K562 (cell line): ENCODE measurements at regions of chr10 and their contacts with region 1.

Region 1: DNA sequence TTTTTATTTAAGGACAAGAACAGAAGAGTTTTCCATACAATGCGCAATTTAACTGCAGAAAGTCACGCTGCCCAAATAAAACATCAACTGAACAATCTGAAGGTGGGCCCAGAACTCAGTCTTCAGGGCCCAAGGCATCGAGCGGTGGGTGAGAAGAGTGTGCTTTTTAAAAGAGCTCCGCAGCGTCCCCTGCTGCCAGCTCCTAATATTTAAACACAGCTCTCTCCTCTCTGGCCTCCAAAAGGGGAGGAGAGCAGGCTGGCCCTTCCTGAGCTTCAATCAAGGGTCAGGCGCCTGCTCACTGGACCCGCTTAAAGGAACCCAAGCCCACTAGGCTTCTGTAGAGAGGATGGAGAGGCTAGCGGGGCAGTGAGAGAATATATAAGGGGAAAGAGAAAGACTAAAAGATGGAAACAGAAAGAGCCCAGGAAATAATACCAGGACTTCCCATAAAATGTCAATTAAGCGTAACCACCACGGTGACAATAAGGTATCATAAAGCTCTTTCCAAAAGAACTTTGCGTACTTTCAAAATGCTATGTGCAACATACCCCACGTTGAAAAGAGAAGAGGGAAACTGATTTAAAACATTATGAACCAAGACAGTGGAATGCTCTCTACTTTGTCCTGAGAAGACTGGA is 2.8 kb downstream of the FAM53B start:
- DNase-seq: peak; percentile 68 to 85 (median 74)
- ATAC-seq: peak; percentile 80
- H3K4me3 ChIP-seq: no peak overlapping the region
- H3K27ac ChIP-seq: peak overlapping the region; percentile 43; the same call in 1 of the 3 replicates
- H3K4me1 ChIP-seq: peaks cover 29 to 33% of the 10 kb centered on the region in 2 experiments; a peak in 4 of 5 replicates
- H3K27me3 ChIP-seq: no peaks in the 10 kb centered on the region
- CTCF ChIP-seq: peak; percentile 76 to 86 (median 79)
- EP300 ChIP-seq: no peak
- POLR2A ChIP-seq: no peak
- RAD21 ChIP-seq: peak; percentile 70 to 75

Region 2: GRCh38 chr10:124530215-124530665 is 211.2 kb before region 1 on chr10:
- CTCF ChIA-PET with region 1: interaction called, 17 read pairs
- POLR2A ChIA-PET with region 1: no interaction called
- in situ Hi-C with region 1: no loop called
- intact Hi-C with region 1: no loop called
- DNase-seq: peak; percentile 82 to 86 (median 83)
- ATAC-seq: peak; percentile 96
- H3K4me3 ChIP-seq: no peak overlapping the region
- H3K27ac ChIP-seq: no peak overlapping the region
- H3K4me1 ChIP-seq: peaks cover 3 to 52% of the 10 kb centered on the region in 2 experiments; a peak in 4 of 5 replicates
- H3K27me3 ChIP-seq: no peaks in the 10 kb centered on the region
- CTCF ChIP-seq: peak; percentile 72 to 88 (median 83)
- EP300 ChIP-seq: no peak
- POLR2A ChIP-seq: no peak
- RAD21 ChIP-seq: peak; percentile 70 to 88

Region 3: GRCh38 chr10:124550293-124551034 is 190.9 kb before region 1 on chr10:
- CTCF ChIA-PET with region 1: no interaction called
- POLR2A ChIA-PET with region 1: interaction called, 3 read pairs
- in situ Hi-C with region 1: loop called (anchors 5 kb)
- intact Hi-C with region 1: no loop called
- DNase-seq: no peak
- ATAC-seq: no peak
- H3K4me3 ChIP-seq: no peak overlapping the region
- H3K27ac ChIP-seq: no peak overlapping the region
- H3K4me1 ChIP-seq: peaks cover 0 to 33% of the 10 kb centered on the region in 2 experiments; a peak in 3 of 5 replicates
- H3K27me3 ChIP-seq: no peaks in the 10 kb centered on the region; a peak in 1 of 5 replicates
- CTCF ChIP-seq: no peak
- EP300 ChIP-seq: no peak
- POLR2A ChIP-seq: no peak
- RAD21 ChIP-seq: no peak

Region 4: DNA sequence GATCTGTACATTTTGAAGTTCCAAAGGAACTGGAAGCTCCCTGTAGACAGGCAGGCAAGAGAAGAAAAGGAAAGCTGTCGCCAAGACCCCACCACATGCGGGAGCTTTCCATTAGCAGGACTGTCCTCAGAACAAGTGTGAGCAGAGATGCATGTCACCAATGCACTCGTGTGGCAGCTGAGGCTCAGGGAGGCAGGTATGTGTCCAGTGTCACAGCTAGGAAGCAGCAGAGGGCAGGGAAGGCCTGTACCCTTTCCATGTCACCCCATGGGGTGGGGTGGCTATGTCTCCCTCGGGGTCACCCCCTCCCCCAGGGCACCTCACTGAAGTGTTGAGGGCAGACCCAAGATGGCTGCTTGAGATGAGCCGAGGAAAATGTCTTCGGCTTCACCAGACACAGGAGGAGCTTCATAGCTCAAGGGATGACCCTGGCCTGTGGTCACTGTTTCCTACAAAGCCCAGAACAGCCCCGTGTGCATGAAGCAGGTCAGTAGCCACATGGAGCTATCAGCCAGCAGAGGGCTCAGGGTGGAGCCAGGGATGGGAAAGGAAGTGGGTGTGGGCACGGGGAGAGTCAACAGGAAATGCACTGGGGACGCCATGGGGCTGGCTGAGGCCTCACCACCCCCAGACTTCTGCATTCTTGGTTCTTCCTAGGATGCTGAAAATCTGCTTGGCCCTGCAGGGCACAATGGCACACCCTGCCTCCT is 93.8 kb before region 1 on chr10:
- CTCF ChIA-PET with region 1: no interaction called
- POLR2A ChIA-PET with region 1: no interaction called
- in situ Hi-C with region 1: no loop called
- intact Hi-C with region 1: loop called (anchors 5 kb)
- DNase-seq: peak; percentile 60 to 76 (median 66)
- ATAC-seq: peak; percentile 88
- H3K4me3 ChIP-seq: no peak overlapping the region
- H3K27ac ChIP-seq: peak overlapping the region; percentile 82
- H3K4me1 ChIP-seq: peaks cover 35 to 60% of the 10 kb centered on the region in 2 experiments
- H3K27me3 ChIP-seq: no peaks in the 10 kb centered on the region
- CTCF ChIP-seq: peak; percentile 40 to 45 (median 41); a peak in 4 of 6 replicates
- EP300 ChIP-seq: no peak
- POLR2A ChIP-seq: no peak
- RAD21 ChIP-seq: peak in 1 of 2 experiments; percentile 37; a peak in 3 of 4 replicates

Region 5: GRCh38 chr10:124688889-124689670 is 52.3 kb before region 1 on chr10:
- CTCF ChIA-PET with region 1: no interaction called
- POLR2A ChIA-PET with region 1: interaction called, 3 read pairs
- in situ Hi-C with region 1: no loop called
- intact Hi-C with region 1: loop called (anchors 2 kb)
- DNase-seq: peak; percentile 18 to 70 (median 34)
- ATAC-seq: peak; percentile 51
- H3K4me3 ChIP-seq: no peak overlapping the region
- H3K27ac ChIP-seq: peak overlapping the region; percentile 33; the same call in 2 of the 3 replicates
- H3K4me1 ChIP-seq: peaks cover 47 to 48% of the 10 kb centered on the region in 2 experiments
- H3K27me3 ChIP-seq: no peaks in the 10 kb centered on the region
- CTCF ChIP-seq: no peak
- EP300 ChIP-seq: peak; percentile 49; the same call in 1 of the 2 replicates
- POLR2A ChIP-seq: no peak
- RAD21 ChIP-seq: no peak

Region 6: GRCh38 chr10:124719213-124719851 is 22.1 kb before region 1 on chr10:
- CTCF ChIA-PET with region 1: no interaction called
- POLR2A ChIA-PET with region 1: interaction called, 4 read pairs
- in situ Hi-C with region 1: no loop called
- intact Hi-C with region 1: loop called (anchors 2 kb)
- DNase-seq: peak in 3 of 4 experiments; percentile 24 to 51 (median 48)
- ATAC-seq: peak; percentile 29; the same call in 2 of the 3 replicates
- H3K4me3 ChIP-seq: no peak overlapping the region
- H3K27ac ChIP-seq: no peak overlapping the region
- H3K4me1 ChIP-seq: peaks cover 35 to 48% of the 10 kb centered on the region in 2 experiments
- H3K27me3 ChIP-seq: no peaks in the 10 kb centered on the region
- CTCF ChIP-seq: peak; percentile 25 to 45 (median 41); a peak in 4 of 6 replicates
- EP300 ChIP-seq: no peak
- POLR2A ChIP-seq: no peak
- RAD21 ChIP-seq: peak; percentile 7 to 18; a peak in 1 of 4 replicates

Region 7: DNA sequence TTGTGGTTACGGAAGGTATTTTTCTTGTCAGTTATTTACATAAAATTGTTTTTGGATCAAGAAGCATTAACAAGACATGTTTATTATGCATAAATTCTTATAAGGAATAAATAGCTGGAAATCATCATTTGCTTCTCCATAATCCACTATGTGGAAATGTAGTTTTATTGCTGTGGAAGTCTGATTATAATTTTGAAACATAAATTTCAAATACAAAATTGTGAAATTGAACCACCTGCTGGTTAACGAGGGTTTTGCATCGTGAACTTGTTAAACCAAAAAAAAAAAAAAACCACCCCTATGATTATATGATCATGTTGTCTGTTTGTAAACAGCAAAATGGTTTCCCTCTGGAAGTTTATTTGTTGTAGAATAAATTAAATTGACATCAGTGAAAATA is 86.1 kb after region 1 on chr10:
- CTCF ChIA-PET with region 1: interaction called, 12 read pairs
- POLR2A ChIA-PET with region 1: no interaction called
- in situ Hi-C with region 1: no loop called
- intact Hi-C with region 1: loop called (anchors 10 kb)
- DNase-seq: peak; percentile 4 to 28 (median 18)
- ATAC-seq: no peak
- H3K4me3 ChIP-seq: no peak overlapping the region
- H3K27ac ChIP-seq: no peak overlapping the region
- H3K4me1 ChIP-seq: no peaks in the 10 kb centered on the region
- H3K27me3 ChIP-seq: no peaks in the 10 kb centered on the region
- CTCF ChIP-seq: peak in 1 of 3 experiments; percentile 46; a peak in 2 of 6 replicates
- EP300 ChIP-seq: no peak
- POLR2A ChIP-seq: no peak
- RAD21 ChIP-seq: peak in 1 of 2 experiments; percentile 37; a peak in 2 of 4 replicates